Activated CD4-positive, alpha-beta T cell treated with anti-CD3 and anti-CD28 coated beads for 36 hours (primary cell): ENCODE measurements at regions of chr7 and their contacts with region 1.

Region 1: GRCh38 chr7:24356718-24357386 is 72.9 kb downstream of the NPY start:
- DNase-seq: no peak
- ATAC-seq: peak; percentile 77
- H3K4me3 Mint-ChIP-seq: no peak overlapping the region
- H3K27ac Mint-ChIP-seq: no peak overlapping the region
- H3K4me1 Mint-ChIP-seq: peaks cover 10% of the 10 kb centered on the region
- H3K27me3 Mint-ChIP-seq: peaks cover 20% of the 10 kb centered on the region

Region 2: GRCh38 chr7:24336461-24336860 is 20.4 kb before region 1 on chr7:
- CTCF ChIA-PET with region 1: no interaction called
- POLR2A ChIA-PET with region 1: no interaction called
- intact Hi-C with region 1: loop called in 1 of 2 experiments (anchors 2 kb)
- DNase-seq: peak; percentile 64
- ATAC-seq: peak; percentile 81
- H3K4me3 Mint-ChIP-seq: no peak overlapping the region
- H3K27ac Mint-ChIP-seq: no peak overlapping the region
- H3K4me1 Mint-ChIP-seq: peaks cover 7% of the 10 kb centered on the region
- H3K27me3 Mint-ChIP-seq: peaks cover 22% of the 10 kb centered on the region

Region 3: DNA sequence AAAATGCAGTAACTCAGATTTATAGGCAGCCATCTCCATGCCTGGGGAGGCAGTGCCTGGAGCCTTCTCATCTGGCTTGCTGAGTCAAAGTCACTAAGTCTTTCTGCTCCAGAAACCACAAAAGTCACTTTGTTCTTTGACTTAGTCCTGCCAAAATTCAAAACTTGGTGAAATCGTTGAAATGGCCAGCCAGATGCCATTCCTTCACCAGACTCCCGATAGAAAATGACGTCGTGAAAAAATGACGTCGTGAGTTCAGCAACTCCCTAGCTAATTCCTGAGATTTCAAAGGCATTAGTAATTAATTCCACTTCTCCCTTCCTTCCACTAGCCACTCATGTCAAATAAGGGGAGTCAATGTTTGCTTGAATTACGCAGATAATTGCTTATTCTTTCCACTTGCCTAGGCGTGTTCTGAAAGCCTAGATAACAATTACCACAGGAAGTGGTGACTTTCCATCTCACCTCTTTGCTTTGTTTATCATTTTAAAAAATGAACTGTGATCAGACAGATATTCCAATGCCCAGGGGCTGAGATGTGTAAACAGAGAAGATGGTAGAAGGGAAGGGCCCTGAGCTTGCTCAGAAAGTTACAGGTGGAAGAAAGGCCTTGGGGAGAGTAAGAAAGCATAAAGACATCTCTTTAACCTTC is 671.6 kb after region 1 on chr7:
- CTCF ChIA-PET with region 1: no interaction called
- POLR2A ChIA-PET with region 1: no interaction called
- intact Hi-C with region 1: no loop called
- DNase-seq: peak; percentile 50
- ATAC-seq: peak; percentile 89
- H3K4me3 Mint-ChIP-seq: peak overlapping the region; percentile 41
- H3K27ac Mint-ChIP-seq: peak overlapping the region; percentile 87
- H3K4me1 Mint-ChIP-seq: peaks cover 46% of the 10 kb centered on the region
- H3K27me3 Mint-ChIP-seq: no peaks in the 10 kb centered on the region